Activated CD4-positive, alpha-beta T cell treated with anti-CD3 and anti-CD28 coated beads for 36 hours (primary cell): ENCODE measurements at regions of chr17 and their contacts with region 1.

Region 1: GRCh38 chr17:80263253-80264204 is 2.9 kb downstream of the RNF213 start:
- DNase-seq: peak; percentile 94
- ATAC-seq: peak; percentile 37
- H3K4me3 Mint-ChIP-seq: peak overlapping the region; percentile 98
- H3K27ac Mint-ChIP-seq: peak overlapping the region; percentile 91
- H3K4me1 Mint-ChIP-seq: peaks cover 55% of the 10 kb centered on the region
- H3K27me3 Mint-ChIP-seq: no peaks in the 10 kb centered on the region

Region 2: DNA sequence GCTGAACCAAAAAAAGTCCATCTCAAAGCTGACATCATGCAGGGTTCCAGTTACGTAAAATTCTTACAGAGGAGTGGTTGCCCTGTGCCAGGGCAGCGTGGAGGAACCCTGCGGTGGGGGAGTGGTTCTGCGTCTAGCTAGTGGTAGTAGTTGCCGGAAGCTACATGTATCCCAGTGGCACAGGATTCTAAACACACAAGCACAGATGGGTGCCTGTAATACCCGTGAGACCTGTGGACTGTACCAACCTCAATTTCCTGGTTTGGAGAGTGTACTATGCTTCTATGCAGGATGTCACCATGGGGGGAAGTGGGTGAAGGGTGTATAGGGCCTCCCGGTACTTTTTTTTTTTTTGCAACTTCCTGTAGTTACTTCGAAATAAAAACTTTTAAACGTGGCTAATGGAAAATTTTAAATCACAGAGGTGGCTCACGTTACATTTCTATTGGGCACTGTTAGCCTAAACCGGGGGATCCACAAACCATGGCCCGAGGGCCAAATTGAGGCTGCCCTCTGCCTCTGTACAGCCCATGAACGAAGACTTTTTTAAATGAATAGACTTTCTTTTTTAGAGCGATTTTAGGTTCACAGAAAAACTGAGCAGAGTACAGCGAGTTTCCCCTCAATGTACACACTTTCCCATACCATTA is 266.4 kb before region 1 on chr17:
- CTCF ChIA-PET with region 1: no interaction called
- POLR2A ChIA-PET with region 1: no interaction called
- intact Hi-C with region 1: loop called (anchors 2 to 10 kb)
- DNase-seq: peak; percentile 88
- ATAC-seq: peak; percentile 88
- H3K4me3 Mint-ChIP-seq: peak overlapping the region; percentile 60
- H3K27ac Mint-ChIP-seq: peak overlapping the region; percentile 98
- H3K4me1 Mint-ChIP-seq: peaks cover 53% of the 10 kb centered on the region
- H3K27me3 Mint-ChIP-seq: no peaks in the 10 kb centered on the region

Region 3: GRCh38 chr17:80147035-80147836 is 116.3 kb before region 1 on chr17 and contains the start of gene EIF4A3:
- CTCF ChIA-PET with region 1: no interaction called
- POLR2A ChIA-PET with region 1: interaction called, 3 read pairs
- intact Hi-C with region 1: loop called (anchors 1 to 2 kb)
- DNase-seq: peak; percentile 99
- ATAC-seq: peak; percentile 91
- H3K4me3 Mint-ChIP-seq: peak within 1 kb of the TSS; percentile 77
- H3K27ac Mint-ChIP-seq: peak within 1 kb of the TSS; percentile 93
- H3K4me1 Mint-ChIP-seq: peaks cover 43% of the 10 kb centered on the region
- H3K27me3 Mint-ChIP-seq: no peaks in the 10 kb centered on the region
- total RNA-seq, gene EIF4A3: 103 to 141 TPM

Region 4: GRCh38 chr17:80187515-80187941 is 76.0 kb before region 1 on chr17:
- CTCF ChIA-PET with region 1: no interaction called
- POLR2A ChIA-PET with region 1: no interaction called
- intact Hi-C with region 1: no loop called
- DNase-seq: no peak
- ATAC-seq: no peak
- H3K4me3 Mint-ChIP-seq: no peak overlapping the region
- H3K27ac Mint-ChIP-seq: no peak overlapping the region
- H3K4me1 Mint-ChIP-seq: no peaks in the 10 kb centered on the region
- H3K27me3 Mint-ChIP-seq: peaks cover 5% of the 10 kb centered on the region

Region 5: GRCh38 chr17:80237351-80237750 is 26.2 kb before region 1 on chr17:
- CTCF ChIA-PET with region 1: no interaction called
- POLR2A ChIA-PET with region 1: no interaction called
- intact Hi-C with region 1: no loop called
- DNase-seq: no peak
- ATAC-seq: no peak
- H3K4me3 Mint-ChIP-seq: no peak overlapping the region
- H3K27ac Mint-ChIP-seq: no peak overlapping the region
- H3K4me1 Mint-ChIP-seq: no peaks in the 10 kb centered on the region
- H3K27me3 Mint-ChIP-seq: no peaks in the 10 kb centered on the region

Region 6: DNA sequence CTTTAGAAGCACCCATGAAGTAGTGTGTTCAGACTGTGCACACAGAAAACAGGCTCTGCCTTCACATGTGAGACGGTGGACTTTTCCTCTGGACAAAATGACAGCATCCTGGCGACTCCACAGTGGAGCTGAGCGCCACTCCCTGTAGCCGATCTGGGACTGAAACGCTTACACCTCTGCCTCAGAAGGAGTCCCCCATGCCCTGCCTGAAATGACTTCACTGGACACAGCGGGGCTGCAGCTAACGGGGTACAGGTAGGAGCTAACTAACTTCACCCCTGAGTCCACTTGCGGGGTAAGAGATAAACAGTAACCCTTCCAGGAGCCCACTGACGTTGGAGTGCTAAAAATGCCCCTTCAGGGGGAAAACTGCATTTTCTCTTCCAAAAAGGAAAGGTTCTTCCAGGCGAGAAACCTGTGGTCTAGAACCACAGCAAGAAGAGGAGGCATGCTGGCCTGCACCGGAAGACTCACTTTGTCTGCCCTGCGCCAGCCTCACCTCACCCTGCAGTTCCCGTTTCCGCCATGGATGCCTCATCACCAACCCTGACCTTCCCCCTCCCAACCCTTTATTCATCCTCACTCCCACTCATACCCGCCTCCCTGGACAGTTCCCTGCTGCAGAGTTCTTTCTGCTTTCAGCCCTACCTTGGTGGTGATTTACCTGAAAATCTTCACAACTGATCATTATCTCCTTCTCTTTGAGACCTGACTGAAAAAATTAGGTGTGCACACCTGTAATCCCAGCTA is 132.0 kb after region 1 on chr17:
- CTCF ChIA-PET with region 1: no interaction called
- POLR2A ChIA-PET with region 1: no interaction called
- intact Hi-C with region 1: no loop called
- DNase-seq: no peak
- ATAC-seq: peak; percentile 45
- H3K4me3 Mint-ChIP-seq: no peak overlapping the region
- H3K27ac Mint-ChIP-seq: no peak overlapping the region
- H3K4me1 Mint-ChIP-seq: peaks cover 6% of the 10 kb centered on the region
- H3K27me3 Mint-ChIP-seq: no peaks in the 10 kb centered on the region

Region 7: GRCh38 chr17:80414803-80415625 is 151.5 kb after region 1 on chr17 and contains the start of gene ENDOV:
- CTCF ChIA-PET with region 1: no interaction called
- POLR2A ChIA-PET with region 1: no interaction called
- intact Hi-C with region 1: loop called in 1 of 2 experiments (anchors 1 kb)
- DNase-seq: peak; percentile 95
- ATAC-seq: peak; percentile 96
- H3K4me3 Mint-ChIP-seq: peak within 1 kb of the TSS; percentile 81
- H3K27ac Mint-ChIP-seq: peak within 1 kb of the TSS; percentile 8
- H3K4me1 Mint-ChIP-seq: peaks cover 23% of the 10 kb centered on the region
- H3K27me3 Mint-ChIP-seq: peaks cover 16% of the 10 kb centered on the region
- total RNA-seq, gene ENDOV: 12.3 to 13.0 TPM

Region 8: DNA sequence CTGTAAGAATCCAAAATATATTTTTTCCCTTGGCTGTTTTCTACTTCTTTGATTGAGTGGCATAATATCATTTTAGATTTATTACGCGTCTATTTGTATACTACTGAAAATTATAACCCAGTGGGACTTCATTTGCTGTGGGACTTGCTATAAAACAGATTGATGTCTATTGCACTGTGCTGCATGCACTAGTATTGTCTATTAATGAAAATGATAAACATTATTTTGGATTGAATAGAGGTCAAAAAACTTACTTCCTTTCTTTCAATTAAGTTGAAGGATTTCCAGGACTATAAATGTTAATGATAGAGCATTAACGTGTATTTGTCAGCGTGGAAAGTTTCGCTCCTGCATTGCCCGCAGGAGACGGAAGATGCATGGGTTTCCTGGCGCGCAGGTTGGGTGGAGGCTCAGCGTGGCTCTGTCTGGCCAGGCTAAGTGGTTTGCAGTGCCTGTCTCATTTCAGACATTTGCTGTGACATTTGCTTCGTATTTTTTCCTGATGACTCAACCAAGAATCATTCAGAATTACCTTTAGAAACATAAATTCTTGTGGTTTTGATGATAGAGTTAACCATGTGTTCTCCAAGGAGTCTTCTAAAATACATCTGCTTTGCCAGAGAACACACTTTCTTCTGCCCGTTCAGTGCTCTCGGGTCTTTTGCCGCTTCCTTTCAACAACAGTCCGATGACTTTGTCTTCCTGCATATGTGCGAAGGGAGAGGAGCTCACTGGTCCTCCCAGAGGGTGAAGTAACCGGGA is 497.8 kb after region 1 on chr17:
- CTCF ChIA-PET with region 1: no interaction called
- POLR2A ChIA-PET with region 1: no interaction called
- intact Hi-C with region 1: loop called in 1 of 2 experiments (anchors 2 kb)
- DNase-seq: peak; percentile 86
- ATAC-seq: peak; percentile 82
- H3K4me3 Mint-ChIP-seq: peak overlapping the region; percentile 60
- H3K27ac Mint-ChIP-seq: peak overlapping the region; percentile 98
- H3K4me1 Mint-ChIP-seq: peaks cover 77% of the 10 kb centered on the region
- H3K27me3 Mint-ChIP-seq: no peaks in the 10 kb centered on the region